AG04450 (cell line): ENCODE measurements at regions of chr10 and their contacts with region 1.

Region 1: DNA sequence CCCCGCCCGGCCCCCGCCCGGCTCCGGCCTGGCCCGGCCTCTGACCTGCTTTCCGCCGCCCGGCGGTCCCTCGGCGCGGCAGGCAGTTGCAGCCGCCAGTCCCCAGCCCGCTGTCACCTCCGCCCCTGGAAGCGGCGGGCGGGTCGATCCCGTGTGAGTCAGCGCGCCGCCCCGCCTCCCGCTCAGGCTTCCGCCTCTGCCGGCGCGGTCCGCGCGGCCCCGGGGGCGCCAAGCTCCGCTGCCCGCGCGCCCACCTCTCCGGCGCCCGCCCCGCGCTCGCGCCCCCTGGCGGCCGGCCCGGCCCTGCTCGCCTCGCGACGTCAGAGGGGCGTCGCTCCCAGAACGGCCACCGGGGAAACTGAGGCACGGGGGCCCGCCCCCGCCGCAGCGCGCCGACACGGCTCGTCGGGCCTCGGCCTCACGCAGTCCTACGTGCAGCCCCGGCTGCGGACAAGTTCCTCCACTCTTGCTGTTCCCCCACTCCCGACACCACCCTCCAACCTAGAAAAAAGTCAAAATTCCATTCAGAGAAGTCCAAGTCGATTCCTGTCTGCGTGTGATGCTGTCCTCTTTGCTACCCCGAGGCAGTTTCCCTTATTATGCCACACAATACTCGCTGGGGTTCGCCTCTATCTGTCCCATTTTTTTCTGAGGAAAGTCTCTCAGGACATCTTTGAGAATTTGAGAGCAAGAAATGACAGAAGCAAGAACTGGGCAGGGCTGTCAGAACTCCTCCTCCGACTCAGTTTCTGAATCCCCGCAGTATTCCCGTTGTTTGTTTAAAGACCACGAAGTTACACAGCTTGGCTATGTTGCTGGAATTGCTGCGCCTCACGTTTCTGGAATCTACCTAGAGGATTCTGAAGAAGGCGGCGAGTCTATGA is at the start of gene DNMBP:
- DNase-seq: no peak
- H3K4me3 ChIP-seq: peak within 1 kb of the TSS; percentile 94
- H3K27ac ChIP-seq: peak within 1 kb of the TSS; percentile 62
- H3K27me3 ChIP-seq: no peaks in the 10 kb centered on the region
- CTCF ChIP-seq: no peak; the same call in 1 of the 2 replicates
- polyA plus RNA-seq, gene DNMBP: 16.1 and 18.2 TPM in 2 replicates

Region 2: GRCh38 chr10:99854860-99855259 is 155.2 kb before region 1 on chr10:
- CTCF ChIA-PET with region 1: interaction called, 15 read pairs
- POLR2A ChIA-PET with region 1: no interaction called
- DNase-seq: peak; percentile 61
- H3K4me3 ChIP-seq: no peak overlapping the region
- H3K27ac ChIP-seq: no peak overlapping the region
- H3K27me3 ChIP-seq: no peaks in the 10 kb centered on the region
- CTCF ChIP-seq: peak; percentile 76

Region 3: GRCh38 chr10:99966306-99966705 is 43.7 kb before region 1 on chr10:
- CTCF ChIA-PET with region 1: interaction called, 22 read pairs
- POLR2A ChIA-PET with region 1: interaction called, 9 read pairs
- DNase-seq: no peak
- H3K4me3 ChIP-seq: no peak overlapping the region
- H3K27ac ChIP-seq: no peak overlapping the region
- H3K27me3 ChIP-seq: no peaks in the 10 kb centered on the region
- CTCF ChIP-seq: no peak

Region 4: GRCh38 chr10:99976886-99977665 is 33.0 kb before region 1 on chr10:
- CTCF ChIA-PET with region 1: interaction called, 5 read pairs
- POLR2A ChIA-PET with region 1: interaction called, 11 read pairs
- DNase-seq: peak; percentile 78
- H3K4me3 ChIP-seq: peak overlapping the region; percentile 14; the same call in 1 of the 2 replicates
- H3K27ac ChIP-seq: peak overlapping the region; percentile 79
- H3K27me3 ChIP-seq: no peaks in the 10 kb centered on the region
- CTCF ChIP-seq: no peak

Region 5: GRCh38 chr10:99993701-99994689 is 16.0 kb before region 1 on chr10:
- CTCF ChIA-PET with region 1: interaction called, 15 read pairs
- POLR2A ChIA-PET with region 1: interaction called, 7 read pairs
- DNase-seq: no peak
- H3K4me3 ChIP-seq: no peak overlapping the region
- H3K27ac ChIP-seq: peak overlapping the region; percentile 13
- H3K27me3 ChIP-seq: no peaks in the 10 kb centered on the region
- CTCF ChIP-seq: no peak

Region 6: DNA sequence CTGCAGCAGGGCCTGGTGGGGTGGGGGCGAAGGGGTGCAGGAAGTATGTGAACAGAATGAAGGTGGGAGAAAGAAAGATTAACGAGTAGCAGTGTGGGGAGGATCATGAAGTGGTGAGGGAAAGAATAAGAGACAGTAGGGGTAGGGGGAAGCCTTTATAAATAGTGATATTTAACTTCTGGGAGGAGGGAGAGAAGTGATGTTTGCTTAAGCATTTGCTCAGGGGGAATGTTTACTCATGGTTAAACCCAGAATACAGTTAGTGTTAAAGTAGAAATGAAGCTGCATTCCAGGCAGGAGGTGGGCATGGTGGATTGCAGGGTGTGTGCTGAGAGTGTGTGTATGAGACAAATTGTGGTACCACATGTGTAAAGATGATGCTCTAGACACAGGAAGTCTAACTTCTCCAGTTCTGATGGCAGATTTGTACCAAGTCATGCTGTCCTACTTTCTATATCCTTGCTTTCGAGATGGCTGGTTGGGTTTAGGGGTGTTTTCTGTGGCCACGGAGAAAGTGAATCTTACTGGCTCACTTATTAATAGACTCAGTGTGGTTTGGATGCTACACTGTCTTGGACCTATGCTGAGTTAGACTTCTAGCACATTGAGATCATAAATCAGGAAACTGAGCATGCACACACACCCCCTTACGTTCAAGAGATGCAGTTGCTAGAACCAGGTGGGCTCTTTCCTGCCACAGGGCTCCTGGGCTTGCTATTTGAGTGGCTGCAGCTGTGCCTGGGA is 10.3 kb after region 1 on chr10:
- CTCF ChIA-PET with region 1: interaction called, 11 read pairs
- POLR2A ChIA-PET with region 1: interaction called, 5 read pairs
- DNase-seq: no peak
- H3K4me3 ChIP-seq: no peak overlapping the region
- H3K27ac ChIP-seq: no peak overlapping the region
- H3K27me3 ChIP-seq: peaks cover 4% of the 10 kb centered on the region
- CTCF ChIP-seq: no peak